ENCODE measurements at regions of chr13 and their contacts with region 1.

Region 1: GRCh38 chr13:68636784-68637183 is 1406.6 kb upstream of the PCDH9 start:
- DNase-seq: no peak
- H3K4me3 Mint-ChIP-seq: no peak overlapping the region
- H3K27ac Mint-ChIP-seq: no peak overlapping the region
- H3K4me1 Mint-ChIP-seq: no peaks in the 10 kb centered on the region
- H3K27me3 Mint-ChIP-seq: no peaks in the 10 kb centered on the region
- CTCF ChIP-seq: no peak

Region 2: GRCh38 chr13:68897331-68897928 is 260.6 kb after region 1 on chr13:
- CTCF ChIA-PET with region 1: no interaction called
- POLR2A ChIA-PET with region 1: interaction called, 11 read pairs
- intact Hi-C with region 1: no loop called
- DNase-seq: no peak
- H3K4me3 Mint-ChIP-seq: no peak overlapping the region
- H3K27ac Mint-ChIP-seq: no peak overlapping the region
- H3K4me1 Mint-ChIP-seq: no peaks in the 10 kb centered on the region
- H3K27me3 Mint-ChIP-seq: no peaks in the 10 kb centered on the region
- CTCF ChIP-seq: no peak

Measured in MCF 10A (cell line).